Calu3 (cell line): ENCODE measurements at regions of chr6 and their contacts with region 1.

Region 1: DNA sequence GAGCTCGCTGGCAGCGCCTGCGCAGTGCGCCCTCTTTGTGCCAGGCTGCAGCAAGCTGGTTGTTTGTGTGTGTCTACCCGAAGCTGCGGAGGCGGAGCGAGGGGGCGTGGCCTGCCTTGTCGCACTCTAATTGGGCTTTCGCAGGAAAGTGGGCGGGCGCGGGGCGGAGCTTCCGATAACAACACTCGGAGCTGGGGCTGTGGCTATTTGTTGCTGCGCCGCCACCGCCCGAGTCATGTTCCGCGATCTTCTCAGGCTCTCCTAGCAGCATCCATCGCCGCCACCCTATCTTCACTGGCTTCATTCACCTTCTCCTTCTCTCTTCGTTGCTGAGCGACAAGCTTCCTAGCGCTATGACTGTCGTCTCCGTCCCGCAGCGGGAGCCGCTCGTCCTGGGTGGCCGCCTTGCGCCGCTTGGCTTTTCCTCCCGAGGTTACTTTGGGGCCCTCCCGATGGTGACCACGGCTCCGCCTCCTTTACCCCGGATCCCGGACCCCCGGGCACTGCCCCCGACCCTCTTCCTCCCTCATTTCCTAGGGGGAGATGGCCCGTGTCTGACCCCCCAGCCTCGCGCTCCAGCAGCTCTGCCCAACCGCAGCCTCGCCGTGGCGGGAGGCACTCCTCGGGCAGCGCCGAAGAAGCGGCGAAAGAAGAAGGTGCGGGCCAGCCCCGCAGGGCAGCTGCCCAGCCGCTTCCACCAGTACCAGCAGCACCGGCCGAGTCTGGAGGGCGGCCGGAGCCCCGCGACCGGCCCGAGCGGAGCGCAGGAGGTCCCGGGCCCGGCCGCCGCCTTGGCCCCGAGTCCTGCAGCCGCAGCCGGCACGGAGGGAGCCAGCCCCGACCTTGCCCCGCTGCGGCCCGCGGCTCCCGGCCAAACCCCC is at the start of gene PNRC1:
- DNase-seq: peak; percentile 99
- H3K4me3 Mint-ChIP-seq: peak within 1 kb of the TSS; percentile 86
- H3K27ac Mint-ChIP-seq: peak within 1 kb of the TSS; percentile 87
- H3K4me1 Mint-ChIP-seq: peaks cover 10% of the 10 kb centered on the region
- H3K27me3 Mint-ChIP-seq: no peaks in the 10 kb centered on the region
- CTCF ChIP-seq: no peak
- total RNA-seq, gene PNRC1: 45.4 and 46.2 TPM in 2 replicates

Region 2: DNA sequence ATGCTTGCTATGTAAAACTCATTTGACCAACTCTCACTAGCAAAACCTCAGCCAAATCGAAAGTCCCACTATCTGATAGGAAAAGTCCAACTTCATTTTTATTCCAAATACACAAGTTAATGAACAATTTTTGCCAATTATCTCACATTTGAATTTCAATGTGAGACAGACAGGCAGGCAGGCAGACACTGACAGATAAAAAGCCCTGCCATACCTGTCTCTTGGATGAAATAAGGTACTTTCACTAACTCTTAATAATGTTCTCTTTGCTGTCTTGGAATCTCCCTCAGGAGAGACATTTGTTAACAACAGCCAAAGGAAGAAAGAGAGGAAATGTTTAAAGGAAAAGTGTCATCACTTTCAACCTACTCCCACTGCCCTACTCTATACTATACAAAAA is 199.3 kb before region 1 on chr6:
- CTCF ChIA-PET with region 1: no interaction called
- intact Hi-C with region 1: no loop called
- DNase-seq: no peak
- H3K4me3 Mint-ChIP-seq: no peak overlapping the region
- H3K27ac Mint-ChIP-seq: no peak overlapping the region
- H3K4me1 Mint-ChIP-seq: peaks cover 10% of the 10 kb centered on the region
- H3K27me3 Mint-ChIP-seq: no peaks in the 10 kb centered on the region
- CTCF ChIP-seq: no peak

Region 3: GRCh38 chr6:88982720-88983119 is 98.1 kb before region 1 on chr6:
- CTCF ChIA-PET with region 1: interaction called, 38 read pairs
- intact Hi-C with region 1: loop called (anchors 2 kb)
- DNase-seq: no peak
- H3K4me3 Mint-ChIP-seq: no peak overlapping the region
- H3K27ac Mint-ChIP-seq: no peak overlapping the region
- H3K4me1 Mint-ChIP-seq: peaks cover 14% of the 10 kb centered on the region
- H3K27me3 Mint-ChIP-seq: no peaks in the 10 kb centered on the region
- CTCF ChIP-seq: no peak

Region 4: GRCh38 chr6:89035252-89036106 is 45.3 kb before region 1 on chr6:
- CTCF ChIA-PET with region 1: interaction called, 6 read pairs
- intact Hi-C with region 1: loop called (anchors 1 kb)
- DNase-seq: peak; percentile 62
- H3K4me3 Mint-ChIP-seq: peak overlapping the region; percentile 62
- H3K27ac Mint-ChIP-seq: peak overlapping the region; percentile 99
- H3K4me1 Mint-ChIP-seq: peaks cover 17% of the 10 kb centered on the region
- H3K27me3 Mint-ChIP-seq: no peaks in the 10 kb centered on the region
- CTCF ChIP-seq: no peak

Region 5: DNA sequence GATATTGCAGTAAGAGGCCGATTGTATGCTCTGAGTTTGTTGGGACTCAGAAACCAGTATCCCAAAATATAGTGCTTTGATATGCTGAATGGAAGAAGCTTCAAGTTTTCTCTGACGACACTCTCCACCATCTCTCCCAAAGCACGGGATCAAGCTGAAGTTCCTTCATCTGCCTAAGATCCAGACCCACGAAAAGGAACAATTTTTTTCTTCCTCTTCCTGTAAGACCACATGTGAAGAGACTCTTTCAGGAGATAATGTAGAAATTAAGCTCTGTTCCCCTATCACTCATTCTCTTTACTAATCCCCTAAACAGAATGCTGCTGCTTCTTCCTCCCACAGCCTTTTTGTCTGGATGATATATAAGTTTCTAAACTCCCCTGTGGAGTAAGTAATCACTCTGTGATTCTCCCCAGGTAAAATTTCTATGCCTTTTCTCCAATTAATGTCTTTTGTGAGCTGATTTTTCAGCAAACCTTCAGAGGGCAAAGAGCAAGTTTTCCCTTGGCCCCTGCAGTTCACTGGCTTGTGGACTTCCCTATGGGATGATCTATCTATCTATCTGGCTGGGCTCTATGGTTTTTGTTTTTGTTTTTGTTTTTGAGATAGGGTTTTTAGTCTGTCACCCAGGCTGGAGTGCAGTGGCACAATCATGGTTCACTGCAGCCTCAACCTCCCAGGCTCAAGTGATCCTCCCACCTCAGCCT is 13.7 kb before region 1 on chr6:
- CTCF ChIA-PET with region 1: interaction called, 12 read pairs
- intact Hi-C with region 1: no loop called
- DNase-seq: no peak
- H3K4me3 Mint-ChIP-seq: no peak overlapping the region
- H3K27ac Mint-ChIP-seq: no peak overlapping the region
- H3K4me1 Mint-ChIP-seq: peaks cover 15% of the 10 kb centered on the region
- H3K27me3 Mint-ChIP-seq: no peaks in the 10 kb centered on the region
- CTCF ChIP-seq: no peak